ENCODE measurements at regions of chr5 and their contacts with region 1.

Region 1: GRCh38 chr5:171850324-171851285 is 65.0 kb downstream of the SMIM23 start:
- DNase-seq: no peak
- H3K4me3 Mint-ChIP-seq: no peak overlapping the region
- H3K27ac Mint-ChIP-seq: no peak overlapping the region
- H3K4me1 Mint-ChIP-seq: no peaks in the 10 kb centered on the region
- H3K27me3 Mint-ChIP-seq: no peaks in the 10 kb centered on the region
- CTCF ChIP-seq: no peak

Region 2: DNA sequence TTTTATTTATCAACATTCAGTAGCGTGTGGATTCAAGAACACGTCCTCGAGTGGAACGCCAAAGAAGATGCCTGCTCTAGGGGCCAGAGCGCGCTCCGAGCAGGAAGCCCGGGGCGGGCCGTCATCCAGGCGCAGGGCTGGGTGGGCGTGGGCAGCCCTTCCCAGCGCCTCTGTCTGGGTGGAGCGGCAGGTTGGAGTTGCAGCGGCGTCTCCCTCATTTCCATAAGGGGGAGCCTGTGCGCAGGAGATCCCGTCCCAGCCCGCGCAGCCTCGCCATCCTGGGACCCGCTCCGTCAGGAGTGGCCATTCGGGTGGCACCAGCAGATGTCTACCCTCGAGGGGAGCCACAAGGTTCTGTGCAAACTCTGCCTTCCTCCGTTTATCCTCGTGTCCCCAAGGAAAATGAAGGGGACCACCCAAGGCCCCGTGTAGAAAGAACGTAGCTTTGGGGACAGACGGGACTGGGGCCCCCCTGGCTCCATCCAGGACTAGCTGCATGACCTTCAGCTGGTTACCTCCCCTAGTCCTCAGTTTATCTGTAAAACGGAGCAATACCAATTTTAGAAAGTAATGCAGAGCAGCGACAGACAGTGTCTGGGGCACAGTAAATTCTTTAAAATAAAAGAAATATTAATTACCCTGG is 220.5 kb before region 1 on chr5:
- CTCF ChIA-PET with region 1: no interaction called
- intact Hi-C with region 1: loop called (anchors 2 kb)
- DNase-seq: peak; percentile 80
- H3K4me3 Mint-ChIP-seq: peak overlapping the region; percentile 59
- H3K27ac Mint-ChIP-seq: no peak overlapping the region
- H3K4me1 Mint-ChIP-seq: peaks cover 23% of the 10 kb centered on the region
- H3K27me3 Mint-ChIP-seq: peaks cover 52% of the 10 kb centered on the region
- CTCF ChIP-seq: no peak

Region 3: GRCh38 chr5:171676286-171676944 is 174.2 kb before region 1 on chr5:
- CTCF ChIA-PET with region 1: no interaction called
- intact Hi-C with region 1: no loop called
- DNase-seq: no peak
- H3K4me3 Mint-ChIP-seq: no peak overlapping the region
- H3K27ac Mint-ChIP-seq: no peak overlapping the region
- H3K4me1 Mint-ChIP-seq: no peaks in the 10 kb centered on the region
- H3K27me3 Mint-ChIP-seq: peaks cover 100% of the 10 kb centered on the region
- CTCF ChIP-seq: no peak

Region 4: GRCh38 chr5:171701100-171701541 is 149.5 kb before region 1 on chr5:
- CTCF ChIA-PET with region 1: no interaction called
- intact Hi-C with region 1: no loop called
- DNase-seq: no peak
- H3K4me3 Mint-ChIP-seq: no peak overlapping the region
- H3K27ac Mint-ChIP-seq: no peak overlapping the region
- H3K4me1 Mint-ChIP-seq: no peaks in the 10 kb centered on the region
- H3K27me3 Mint-ChIP-seq: peaks cover 63% of the 10 kb centered on the region
- CTCF ChIP-seq: no peak

Region 5: GRCh38 chr5:171770153-171770552 is 80.5 kb before region 1 on chr5:
- CTCF ChIA-PET with region 1: no interaction called
- intact Hi-C with region 1: no loop called
- DNase-seq: no peak
- H3K4me3 Mint-ChIP-seq: no peak overlapping the region
- H3K27ac Mint-ChIP-seq: no peak overlapping the region
- H3K4me1 Mint-ChIP-seq: no peaks in the 10 kb centered on the region
- H3K27me3 Mint-ChIP-seq: peaks cover 42% of the 10 kb centered on the region
- CTCF ChIP-seq: no peak

Measured in Calu3 (cell line).